Naive thymus-derived CD4-positive, alpha-beta T cell (primary cell): ENCODE measurements at regions of chr3 and their contacts with region 1.

Region 1: GRCh38 chr3:10026084-10026890 is at the start of gene FANCD2:
- DNase-seq: peak; percentile 88 to 99 (median 94)
- ATAC-seq: peak; percentile 95
- H3K4me3 ChIP-seq: peak within 1 kb of the TSS; percentile 96
- H3K4me3 Mint-ChIP-seq: peak within 1 kb of the TSS; percentile 93 to 99 (median 96)
- H3K27ac ChIP-seq: peak within 1 kb of the TSS; percentile 89
- H3K27ac Mint-ChIP-seq: peak within 1 kb of the TSS; percentile 86 to 98 (median 97)
- H3K4me1 ChIP-seq: peaks cover 11 to 13% of the 10 kb centered on the region in 2 donors
- H3K4me1 Mint-ChIP-seq: peaks cover 0 to 45% (median 29%) of the 10 kb centered on the region in 7 donors
- H3K27me3 ChIP-seq: no peaks in the 10 kb centered on the region
- H3K27me3 Mint-ChIP-seq: no peaks in the 10 kb centered on the region
- total RNA-seq, gene FANCD2: 18.3 to 41.5 (median 34.1) TPM

Region 2: GRCh38 chr3:9902372-9903237 is 123.7 kb before region 1 on chr3 and contains the start of gene IL17RE:
- CTCF ChIA-PET with region 1: no interaction called
- POLR2A ChIA-PET with region 1: no interaction called
- intact Hi-C with region 1: loop called in 1 of 2 experiments (anchors 1 kb)
- DNase-seq: no peak
- ATAC-seq: peak; percentile 38
- H3K4me3 ChIP-seq: no peak within 1 kb of the TSS
- H3K4me3 Mint-ChIP-seq: peak within 1 kb of the TSS in 7 of 10 donors; percentile 23 to 66 (median 37)
- H3K27ac ChIP-seq: no peak within 1 kb of the TSS
- H3K27ac Mint-ChIP-seq: peak within 1 kb of the TSS in 4 of 9 donors; percentile 42 to 76 (median 62)
- H3K4me1 ChIP-seq: peaks cover 10 to 13% of the 10 kb centered on the region in 2 donors
- H3K4me1 Mint-ChIP-seq: peaks cover 18 to 42% (median 32%) of the 10 kb centered on the region in 7 donors
- H3K27me3 ChIP-seq: no peaks in the 10 kb centered on the region
- H3K27me3 Mint-ChIP-seq: no peaks in the 10 kb centered on the region
- total RNA-seq, gene IL17RE: 0.19 to 2.2 (median 0.38) TPM

Region 3: GRCh38 chr3:9915254-9916141 is 110.8 kb before region 1 on chr3:
- CTCF ChIA-PET with region 1: no interaction called
- POLR2A ChIA-PET with region 1: no interaction called
- intact Hi-C with region 1: no loop called
- DNase-seq: peak in 6 of 9 donors; percentile 16 to 52 (median 24)
- ATAC-seq: peak; percentile 63
- H3K4me3 ChIP-seq: peak overlapping the region; percentile 48
- H3K4me3 Mint-ChIP-seq: peak overlapping the region; percentile 72 to 86 (median 79)
- H3K27ac ChIP-seq: peak overlapping the region; percentile 8
- H3K27ac Mint-ChIP-seq: no peak overlapping the region
- H3K4me1 ChIP-seq: peaks cover 0 to 11% of the 10 kb centered on the region in 2 donors
- H3K4me1 Mint-ChIP-seq: peaks cover 0 to 18% (median 8%) of the 10 kb centered on the region in 7 donors
- H3K27me3 ChIP-seq: no peaks in the 10 kb centered on the region
- H3K27me3 Mint-ChIP-seq: no peaks in the 10 kb centered on the region

Region 4: GRCh38 chr3:9986237-9986725 is 40.0 kb before region 1 on chr3:
- CTCF ChIA-PET with region 1: no interaction called
- POLR2A ChIA-PET with region 1: interaction called, 5 read pairs
- intact Hi-C with region 1: loop called (anchors 1 kb)
- DNase-seq: no peak
- ATAC-seq: peak; percentile 52
- H3K4me3 ChIP-seq: peak overlapping the region; percentile 100
- H3K4me3 Mint-ChIP-seq: peak overlapping the region; percentile 95 to 99 (median 98)
- H3K27ac ChIP-seq: peak overlapping the region; percentile 96
- H3K27ac Mint-ChIP-seq: peak overlapping the region; percentile 95 to 100 (median 98)
- H3K4me1 ChIP-seq: peaks cover 13 to 15% of the 10 kb centered on the region in 2 donors
- H3K4me1 Mint-ChIP-seq: peaks cover 0 to 48% (median 35%) of the 10 kb centered on the region in 7 donors
- H3K27me3 ChIP-seq: no peaks in the 10 kb centered on the region
- H3K27me3 Mint-ChIP-seq: no peaks in the 10 kb centered on the region

Region 5: GRCh38 chr3:10010486-10011465 is 15.5 kb before region 1 on chr3:
- CTCF ChIA-PET with region 1: interaction called, 5 read pairs
- POLR2A ChIA-PET with region 1: interaction called, 5 read pairs
- intact Hi-C with region 1: loop called (anchors 1 kb)
- DNase-seq: peak; percentile 25 to 91 (median 46)
- ATAC-seq: peak; percentile 90
- H3K4me3 ChIP-seq: peak overlapping the region; percentile 44
- H3K4me3 Mint-ChIP-seq: peak overlapping the region; percentile 24 to 81 (median 70)
- H3K27ac ChIP-seq: peak overlapping the region; percentile 9
- H3K27ac Mint-ChIP-seq: peak overlapping the region in 2 of 9 donors; percentile 28 to 57
- H3K4me1 ChIP-seq: peaks cover 0 to 14% of the 10 kb centered on the region in 2 donors
- H3K4me1 Mint-ChIP-seq: peaks cover 15 to 28% (median 19%) of the 10 kb centered on the region in 7 donors
- H3K27me3 ChIP-seq: no peaks in the 10 kb centered on the region
- H3K27me3 Mint-ChIP-seq: peaks cover 0 to 19% (median 14%) of the 10 kb centered on the region in 5 donors

Region 6: DNA sequence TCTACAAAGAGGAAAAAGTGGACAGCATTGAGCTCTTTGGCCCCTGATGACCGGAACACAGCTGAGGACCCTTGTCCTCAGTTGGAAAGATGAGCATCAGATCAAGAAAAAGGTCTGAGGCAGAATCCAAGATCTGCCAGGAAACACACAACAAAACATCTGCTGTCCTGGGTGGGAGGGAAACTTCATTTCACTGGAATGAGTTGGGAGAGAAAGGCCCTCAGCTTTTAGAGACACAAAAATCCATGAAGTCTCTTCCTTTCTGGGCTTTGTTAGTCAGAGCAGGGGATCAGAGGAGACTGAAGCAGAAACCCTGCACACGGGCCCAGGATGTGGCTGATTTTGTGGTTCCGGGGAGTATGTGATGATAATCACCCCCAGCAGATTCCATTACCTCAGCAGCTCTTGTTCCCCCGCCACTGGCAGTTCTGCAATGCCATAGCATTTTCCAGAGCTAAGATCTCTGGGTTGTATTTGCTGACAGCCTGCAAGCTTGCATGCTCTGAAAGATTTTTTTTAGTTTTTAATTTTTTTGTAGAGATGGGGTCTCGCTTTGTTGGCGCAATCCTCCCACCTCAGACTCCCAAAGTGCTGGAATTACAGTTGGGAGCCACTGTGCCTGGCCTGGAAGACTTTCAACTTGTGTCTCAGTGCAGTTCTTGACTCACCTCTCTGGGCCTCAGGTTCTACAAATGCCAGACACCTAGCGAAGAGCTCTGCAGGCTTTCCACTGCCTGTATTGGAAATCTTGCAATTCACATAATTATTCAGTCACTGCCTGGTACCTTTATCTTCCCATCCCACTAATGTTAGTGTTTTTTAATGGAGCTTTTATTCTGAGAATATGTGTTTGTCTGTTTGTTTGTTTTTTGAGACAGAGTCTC is 216.1 kb after region 1 on chr3:
- CTCF ChIA-PET with region 1: no interaction called
- POLR2A ChIA-PET with region 1: interaction called, 3 read pairs
- intact Hi-C with region 1: loop called in 1 of 2 experiments (anchors 1 kb)
- DNase-seq: peak; percentile 20 to 93 (median 84)
- ATAC-seq: peak; percentile 98
- H3K4me3 ChIP-seq: peak overlapping the region; percentile 13
- H3K4me3 Mint-ChIP-seq: peak overlapping the region; percentile 75 to 82 (median 77)
- H3K27ac ChIP-seq: peak overlapping the region; percentile 71
- H3K27ac Mint-ChIP-seq: peak overlapping the region; percentile 86 to 96 (median 93)
- H3K4me1 ChIP-seq: peaks cover 33 to 43% of the 10 kb centered on the region in 2 donors
- H3K4me1 Mint-ChIP-seq: peaks cover 40 to 60% (median 54%) of the 10 kb centered on the region in 7 donors
- H3K27me3 ChIP-seq: no peaks in the 10 kb centered on the region
- H3K27me3 Mint-ChIP-seq: no peaks in the 10 kb centered on the region